T-cell (primary cell): ENCODE measurements at regions of chr2 and their contacts with region 1.

Region 1: GRCh38 chr2:64606479-64607363 is 47.0 kb downstream of the SERTAD2 start:
- DNase-seq: peak; percentile 58 to 94 (median 87)
- ATAC-seq: peak; percentile 87 to 95 (median 88)
- H3K4me3 ChIP-seq: peak overlapping the region in 1 of 2 donors; percentile 41
- H3K4me3 Mint-ChIP-seq: peak overlapping the region; percentile 63 to 80 (median 65)
- H3K27ac ChIP-seq: peak overlapping the region; percentile 47
- H3K27ac Mint-ChIP-seq: peak overlapping the region; percentile 15 to 74
- H3K4me1 ChIP-seq: peaks cover 8 to 38% of the 10 kb centered on the region in 2 experiments
- H3K4me1 Mint-ChIP-seq: peaks cover 21 to 38% (median 21%) of the 10 kb centered on the region in 3 donors
- H3K27me3 ChIP-seq: peaks cover 0 to 4% of the 10 kb centered on the region in 2 experiments
- H3K27me3 Mint-ChIP-seq: no peaks in the 10 kb centered on the region

Region 2: GRCh38 chr2:64644177-64645004 is 37.7 kb after region 1 on chr2:
- CTCF ChIA-PET with region 1: interaction called, 3 to 21 read pairs
- POLR2A ChIA-PET with region 1: no interaction called
- DNase-seq: peak in 34 of 35 experiments; percentile 24 to 72 (median 44)
- ATAC-seq: peak; percentile 79 to 82 (median 80)
- H3K4me3 ChIP-seq: peak overlapping the region; percentile 27 to 60
- H3K4me3 Mint-ChIP-seq: peak overlapping the region; percentile 81 to 82 (median 82)
- H3K27ac ChIP-seq: peak overlapping the region; percentile 56
- H3K27ac Mint-ChIP-seq: peak overlapping the region; percentile 87 to 89
- H3K4me1 ChIP-seq: peaks cover 46 to 53% of the 10 kb centered on the region in 2 experiments
- H3K4me1 Mint-ChIP-seq: peaks cover 86 to 95% (median 90%) of the 10 kb centered on the region in 3 donors
- H3K27me3 ChIP-seq: no peaks in the 10 kb centered on the region
- H3K27me3 Mint-ChIP-seq: no peaks in the 10 kb centered on the region

Region 3: GRCh38 chr2:64653349-64654062 is 46.8 kb after region 1 on chr2 and contains the start of gene SERTAD2:
- CTCF ChIA-PET with region 1: interaction called, 3 to 21 read pairs
- POLR2A ChIA-PET with region 1: interaction called in 1 of 2 experiments, 3 read pairs
- DNase-seq: peak; percentile 71 to 93 (median 85)
- ATAC-seq: peak; percentile 89 to 91 (median 90)
- H3K4me3 ChIP-seq: peak within 1 kb of the TSS; percentile 94 to 96
- H3K4me3 Mint-ChIP-seq: peak within 1 kb of the TSS; percentile 88 to 91 (median 89)
- H3K27ac ChIP-seq: peak within 1 kb of the TSS; percentile 86
- H3K27ac Mint-ChIP-seq: peak within 1 kb of the TSS; percentile 91 to 92
- H3K4me1 ChIP-seq: peaks cover 25 to 56% of the 10 kb centered on the region in 2 experiments
- H3K4me1 Mint-ChIP-seq: peaks cover 75 to 81% (median 76%) of the 10 kb centered on the region in 3 donors
- H3K27me3 ChIP-seq: no peaks in the 10 kb centered on the region
- H3K27me3 Mint-ChIP-seq: no peaks in the 10 kb centered on the region
- total RNA-seq, gene SERTAD2: 22.8 to 39.7 (median 27.4) TPM

Region 4: GRCh38 chr2:64666810-64667438 is 60.2 kb after region 1 on chr2:
- CTCF ChIA-PET with region 1: interaction called in 1 of 2 experiments, 3 read pairs
- POLR2A ChIA-PET with region 1: interaction called in 1 of 2 experiments, 13 read pairs
- DNase-seq: peak in 1 of 35 experiments; percentile 37
- ATAC-seq: peak; percentile 76 to 95 (median 89)
- H3K4me3 ChIP-seq: peak overlapping the region in 1 of 2 donors; percentile 29
- H3K4me3 Mint-ChIP-seq: peak overlapping the region in 2 of 3 donors; percentile 15 to 40
- H3K27ac ChIP-seq: peak overlapping the region; percentile 72
- H3K27ac Mint-ChIP-seq: peak overlapping the region in 1 of 2 donors; percentile 97
- H3K4me1 ChIP-seq: peaks cover 18 to 50% of the 10 kb centered on the region in 2 experiments
- H3K4me1 Mint-ChIP-seq: peaks cover 28 to 44% (median 30%) of the 10 kb centered on the region in 3 donors
- H3K27me3 ChIP-seq: no peaks in the 10 kb centered on the region
- H3K27me3 Mint-ChIP-seq: no peaks in the 10 kb centered on the region